Calu3 (cell line): ENCODE measurements at regions of chr12 and their contacts with region 1.

Region 1: GRCh38 chr12:15181017-15181683 is 40.1 kb downstream of the RERG start:
- DNase-seq: no peak
- H3K4me3 Mint-ChIP-seq: no peak overlapping the region
- H3K27ac Mint-ChIP-seq: no peak overlapping the region
- H3K4me1 Mint-ChIP-seq: peaks cover 25% of the 10 kb centered on the region
- H3K27me3 Mint-ChIP-seq: no peaks in the 10 kb centered on the region
- CTCF ChIP-seq: no peak

Region 2: DNA sequence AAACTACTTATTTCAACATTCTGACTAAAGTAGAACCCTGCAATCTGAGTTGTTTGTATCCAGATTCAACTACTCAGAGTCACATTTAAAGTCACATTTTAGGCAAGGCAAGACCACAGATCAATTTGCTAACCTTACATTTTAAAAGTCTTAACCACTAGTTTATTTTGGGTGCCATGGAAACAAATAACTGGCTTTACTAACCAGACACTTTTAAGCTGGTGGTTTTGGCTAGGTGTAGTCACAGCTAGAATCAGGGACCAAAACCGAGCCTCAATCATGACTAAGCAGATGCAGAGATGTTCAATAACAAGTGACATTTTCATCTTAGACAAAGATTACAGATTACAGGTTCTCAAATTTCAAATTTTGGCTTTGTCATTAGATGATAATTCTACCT is 93.0 kb before region 1 on chr12:
- CTCF ChIA-PET with region 1: no interaction called
- intact Hi-C with region 1: no loop called
- DNase-seq: no peak
- H3K4me3 Mint-ChIP-seq: no peak overlapping the region
- H3K27ac Mint-ChIP-seq: no peak overlapping the region
- H3K4me1 Mint-ChIP-seq: no peaks in the 10 kb centered on the region
- H3K27me3 Mint-ChIP-seq: peaks cover 20% of the 10 kb centered on the region
- CTCF ChIP-seq: no peak

Region 3: DNA sequence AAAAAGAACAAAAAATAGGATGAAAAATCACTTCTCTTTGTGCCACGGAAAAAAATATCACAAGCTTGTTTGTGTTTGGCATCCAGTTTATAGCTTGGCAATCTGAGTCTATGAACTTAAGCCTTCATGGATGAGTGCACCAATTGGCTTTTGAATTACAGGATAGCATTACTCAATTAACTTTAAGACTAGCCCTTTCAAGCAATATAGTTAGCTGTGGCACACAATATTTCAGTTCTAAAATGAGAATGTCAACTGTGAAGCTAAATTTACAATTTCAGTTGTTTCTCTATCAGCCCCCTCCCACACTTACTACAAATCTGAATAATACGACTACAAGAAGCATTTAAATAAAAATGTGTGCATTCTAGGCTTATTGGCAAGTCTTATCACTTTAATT is 31.8 kb after region 1 on chr12:
- CTCF ChIA-PET with region 1: no interaction called
- intact Hi-C with region 1: loop called (anchors 2 kb)
- DNase-seq: no peak
- H3K4me3 Mint-ChIP-seq: no peak overlapping the region
- H3K27ac Mint-ChIP-seq: no peak overlapping the region
- H3K4me1 Mint-ChIP-seq: peaks cover 6% of the 10 kb centered on the region
- H3K27me3 Mint-ChIP-seq: no peaks in the 10 kb centered on the region
- CTCF ChIP-seq: no peak